Left cardiac atrium (tissue), 4 donors: ENCODE measurements at regions of chr17 and their contacts with region 1.

Region 1: DNA sequence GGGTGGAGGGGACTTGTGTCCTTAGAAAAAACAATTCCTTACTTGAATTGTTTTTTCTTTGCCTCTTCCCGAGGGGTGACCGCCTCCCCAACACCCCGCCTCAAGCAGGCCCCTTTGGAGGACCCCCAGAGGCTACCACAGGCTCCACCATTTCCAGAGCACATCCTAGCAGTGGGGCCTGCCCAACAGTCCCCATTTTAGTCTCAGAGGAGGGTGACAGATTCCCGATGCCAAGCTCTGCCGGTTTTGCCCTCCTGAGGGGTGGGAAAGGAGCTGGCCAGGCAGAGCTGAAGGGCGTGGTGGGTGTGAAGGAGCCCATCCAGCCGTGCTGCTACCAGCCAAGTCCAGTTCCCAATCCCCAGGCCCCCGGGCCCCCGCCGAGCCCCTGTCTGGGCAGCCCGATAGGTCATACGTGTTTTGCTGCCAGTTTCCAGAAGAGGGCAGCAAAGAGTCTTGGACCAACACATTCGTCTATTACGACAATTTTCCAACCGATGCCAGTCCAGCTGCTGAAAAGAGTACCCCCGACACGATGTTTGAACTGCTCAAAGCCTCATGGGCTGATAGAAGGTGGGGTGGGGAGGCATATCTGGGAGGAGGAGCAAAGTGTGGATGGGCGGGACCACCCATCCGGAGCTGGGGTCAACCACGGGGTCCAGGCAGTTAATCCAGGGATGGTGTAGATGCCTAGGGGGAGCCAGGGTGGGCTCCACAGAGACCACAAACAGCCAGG is 18.8 kb upstream of the GAA start:
- DNase-seq: peak; percentile 68
- ATAC-seq: peak; percentile 57 to 61

Region 2: DNA sequence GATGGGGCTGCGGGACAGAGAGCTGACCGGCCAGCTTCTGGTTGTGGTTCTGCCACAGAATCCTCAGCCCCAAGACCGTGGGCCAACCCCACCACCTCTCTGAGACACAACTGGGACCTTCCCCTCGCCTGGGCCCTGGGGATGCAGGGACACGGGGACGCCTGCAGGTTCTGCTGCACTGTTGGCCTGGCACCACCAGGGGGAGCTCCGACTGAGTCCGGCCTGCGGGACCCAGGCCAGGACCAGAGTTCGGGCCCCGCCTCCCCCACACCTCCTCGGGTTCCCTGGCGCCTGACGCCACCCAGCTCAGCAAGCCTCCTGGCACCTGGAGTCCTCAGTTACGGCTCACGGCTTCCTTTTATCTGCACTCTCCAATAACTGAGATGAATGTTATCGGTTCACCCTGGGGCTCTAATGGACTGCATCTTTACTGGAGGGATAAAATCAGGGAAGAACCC is 74.2 kb before region 1 on chr17:
- intact Hi-C with region 1: loop called in 1 of 2 experiments (anchors 10 kb)
- DNase-seq: peak; percentile 83
- ATAC-seq: peak; percentile 81 to 83

Region 3: GRCh38 chr17:80138856-80139426 is 56.4 kb after region 1 on chr17:
- intact Hi-C with region 1: no loop called
- DNase-seq: no peak
- ATAC-seq: no peak

Region 4: GRCh38 chr17:80270836-80271235 is 188.3 kb after region 1 on chr17:
- intact Hi-C with region 1: no loop called
- DNase-seq: no peak
- ATAC-seq: peak; percentile 50 to 65